Activated CD4-positive, alpha-beta memory T cell treated with anti-CD3 and anti-CD28 coated beads, Interleukin-2, amount 10 ng/mL, durations not matched to agents 7 days and 5 days (primary cell): ENCODE measurements at regions of chr16 and their contacts with region 1.

Region 1: DNA sequence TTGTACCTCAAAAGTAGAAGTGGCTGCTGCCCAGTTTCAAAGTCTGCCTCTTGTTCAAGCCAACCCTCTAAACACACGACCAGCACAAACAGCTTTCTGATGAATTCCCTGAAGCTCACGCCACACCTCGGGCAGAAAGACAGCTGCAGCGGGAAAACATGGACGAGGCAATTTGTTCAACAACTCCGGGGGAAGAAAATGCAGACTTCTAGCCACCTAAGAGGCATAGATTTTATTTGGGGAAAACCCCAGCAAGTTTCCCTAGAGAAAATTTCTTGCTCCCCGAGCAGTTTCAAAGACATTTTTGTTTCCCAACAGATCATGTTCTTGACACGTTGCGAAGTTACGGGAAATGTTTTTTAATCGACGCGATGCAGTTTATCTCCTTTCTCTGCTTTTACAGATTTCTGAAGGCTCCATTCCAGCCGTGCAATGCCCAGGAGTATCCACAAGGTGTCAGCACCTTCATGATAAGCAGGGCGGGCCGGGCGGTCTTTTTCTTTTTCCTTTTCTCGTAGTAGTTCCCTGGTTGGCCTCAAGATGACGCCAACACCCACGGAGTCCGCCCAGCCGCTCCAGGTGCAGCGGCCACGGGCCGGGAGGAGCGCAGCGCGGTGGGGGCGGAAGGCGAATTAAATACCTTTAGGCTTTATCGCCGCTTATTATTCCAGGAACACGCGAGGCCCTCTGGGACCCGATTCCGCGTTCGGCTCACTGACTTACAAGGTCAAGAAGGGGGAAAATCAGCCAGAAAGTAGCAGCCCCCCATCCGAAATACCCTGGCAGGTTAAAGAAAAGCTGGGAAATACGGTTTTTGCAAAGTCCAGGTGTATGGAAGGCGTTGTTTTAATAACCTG is 2.9 kb upstream of the FOXC2 start:
- DNase-seq: peak; percentile 90
- H3K4me3 Mint-ChIP-seq: no peak overlapping the region
- H3K27ac Mint-ChIP-seq: no peak overlapping the region
- H3K4me1 Mint-ChIP-seq: peaks cover 8% of the 10 kb centered on the region
- H3K27me3 Mint-ChIP-seq: peaks cover 42% of the 10 kb centered on the region

Region 2: GRCh38 chr16:86874141-86874540 is 310.4 kb after region 1 on chr16:
- CTCF ChIA-PET with region 1: interaction called, 16 read pairs
- POLR2A ChIA-PET with region 1: no interaction called
- DNase-seq: peak; percentile 42
- H3K4me3 Mint-ChIP-seq: no peak overlapping the region
- H3K27ac Mint-ChIP-seq: no peak overlapping the region
- H3K4me1 Mint-ChIP-seq: no peaks in the 10 kb centered on the region
- H3K27me3 Mint-ChIP-seq: peaks cover 17% of the 10 kb centered on the region

Region 3: GRCh38 chr16:87062569-87063442 is 499.1 kb after region 1 on chr16:
- CTCF ChIA-PET with region 1: interaction called, 30 read pairs
- POLR2A ChIA-PET with region 1: no interaction called
- DNase-seq: peak; percentile 58
- H3K4me3 Mint-ChIP-seq: no peak overlapping the region
- H3K27ac Mint-ChIP-seq: no peak overlapping the region
- H3K4me1 Mint-ChIP-seq: no peaks in the 10 kb centered on the region
- H3K27me3 Mint-ChIP-seq: peaks cover 39% of the 10 kb centered on the region